ENCODE measurements at regions of chr2 and their contacts with region 1.

Region 1: GRCh38 chr2:23460228-23460627 is 75.2 kb downstream of the KLHL29 start:
- DNase-seq: no peak
- H3K4me3 ChIP-seq: no peak overlapping the region
- H3K27ac ChIP-seq: no peak overlapping the region
- H3K4me1 ChIP-seq: peaks cover 0 to 25% (median 23%) of the 10 kb centered on the region in 4 donors
- H3K27me3 ChIP-seq: no peaks in the 10 kb centered on the region
- CTCF ChIP-seq: peak; percentile 22 to 44 (median 26)
- EP300 ChIP-seq: no peak
- POLR2A ChIP-seq: no peak

Region 2: DNA sequence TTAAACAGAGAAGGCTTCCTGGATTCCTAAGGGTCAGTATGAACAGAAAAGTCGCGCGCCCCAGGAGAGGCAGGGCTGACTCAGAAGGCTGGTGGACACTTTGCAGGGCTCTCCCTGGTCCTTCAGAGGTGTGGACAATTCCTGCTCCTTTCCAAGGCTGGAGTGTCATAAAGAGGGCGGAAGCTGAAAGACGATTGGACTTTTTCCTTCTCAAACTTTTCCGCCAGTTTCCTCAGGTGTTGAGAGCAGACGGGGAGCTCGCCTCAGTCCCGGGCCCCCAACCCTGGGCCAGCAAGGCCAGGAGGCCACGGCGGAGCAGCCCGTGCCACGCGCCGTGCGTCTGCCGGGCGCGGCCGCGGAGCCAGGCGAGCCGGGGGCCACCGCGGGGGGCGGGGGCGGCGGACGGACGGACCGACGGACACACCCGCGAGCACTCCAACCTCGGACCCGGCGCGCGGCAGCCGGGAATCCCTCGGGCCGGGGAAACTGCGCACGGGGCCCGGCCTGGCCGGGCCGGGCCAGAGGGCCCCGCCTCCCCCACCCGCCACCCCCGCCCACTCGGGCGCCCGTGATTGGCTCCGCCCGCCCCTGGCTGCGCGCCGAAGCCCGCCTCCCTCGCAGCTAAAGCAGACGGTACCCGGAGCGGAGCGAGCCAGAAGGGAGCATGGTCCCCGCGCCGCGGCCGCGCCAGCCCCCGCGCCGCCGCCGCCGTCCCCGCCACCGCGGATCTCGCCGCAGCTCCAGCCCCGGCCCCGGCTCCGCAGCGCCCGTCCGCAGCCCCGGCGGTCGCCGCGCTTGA is 75.5 kb before region 1 on chr2 and contains the start of gene KLHL29:
- intact Hi-C with region 1: loop called (anchors 10 kb)
- DNase-seq: peak; percentile 95
- H3K4me3 ChIP-seq: peak within 1 kb of the TSS; percentile 89 to 96 (median 92)
- H3K27ac ChIP-seq: peak within 1 kb of the TSS; percentile 94 to 97 (median 95)
- H3K4me1 ChIP-seq: peaks cover 16 to 44% (median 40%) of the 10 kb centered on the region in 4 donors
- H3K27me3 ChIP-seq: peaks cover 0 to 11% (median 0%) of the 10 kb centered on the region in 4 donors
- CTCF ChIP-seq: no peak
- EP300 ChIP-seq: no peak
- POLR2A ChIP-seq: no peak
- total RNA-seq, gene KLHL29: 22.0 to 26.1 (median 23.4) TPM

Region 3: DNA sequence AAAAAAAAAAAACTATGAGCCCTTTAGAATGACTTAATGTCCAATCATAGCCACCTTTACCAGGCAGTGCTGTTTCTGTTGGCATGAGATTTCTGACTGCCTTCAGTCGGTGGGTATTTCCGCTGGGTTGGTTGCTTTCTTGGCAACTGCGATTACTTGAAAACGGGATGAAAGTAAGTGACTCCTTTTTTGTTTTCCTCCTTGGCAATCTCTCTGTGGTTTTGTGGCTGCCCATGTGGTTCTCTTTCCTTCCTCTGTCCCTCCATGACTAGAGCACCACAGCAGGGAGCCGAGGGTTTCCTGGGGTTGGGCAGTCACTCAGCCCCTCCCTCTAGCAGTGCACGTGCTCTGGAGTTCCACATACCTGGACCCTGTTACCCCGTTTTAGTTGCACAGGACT is 36.8 kb after region 1 on chr2:
- intact Hi-C with region 1: no loop called
- DNase-seq: no peak
- H3K4me3 ChIP-seq: no peak overlapping the region
- H3K27ac ChIP-seq: no peak overlapping the region
- H3K4me1 ChIP-seq: peaks cover 11 to 61% (median 51%) of the 10 kb centered on the region in 4 donors
- H3K27me3 ChIP-seq: no peaks in the 10 kb centered on the region
- CTCF ChIP-seq: no peak
- EP300 ChIP-seq: no peak
- POLR2A ChIP-seq: no peak